ENCODE measurements at regions of chr5 and their contacts with region 1.

Region 1: GRCh38 chr5:18078157-18078556 is 443.9 kb downstream of the TAF11L14 start:
- DNase-seq: no peak
- ATAC-seq: no peak
- H3K4me3 Mint-ChIP-seq: no peak overlapping the region
- H3K27ac Mint-ChIP-seq: no peak overlapping the region
- H3K4me1 Mint-ChIP-seq: no peaks in the 10 kb centered on the region
- H3K27me3 Mint-ChIP-seq: no peaks in the 10 kb centered on the region
- CTCF ChIP-seq: no peak

Region 2: GRCh38 chr5:18067615-18068014 is 10.5 kb before region 1 on chr5:
- CTCF ChIA-PET with region 1: no interaction called
- POLR2A ChIA-PET with region 1: interaction called, 10 read pairs
- intact Hi-C with region 1: no loop called
- DNase-seq: no peak
- ATAC-seq: no peak
- H3K4me3 Mint-ChIP-seq: no peak overlapping the region
- H3K27ac Mint-ChIP-seq: no peak overlapping the region
- H3K4me1 Mint-ChIP-seq: no peaks in the 10 kb centered on the region
- H3K27me3 Mint-ChIP-seq: no peaks in the 10 kb centered on the region
- CTCF ChIP-seq: no peak